ENCODE measurements at regions of chr11 and their contacts with region 1.

Region 1: DNA sequence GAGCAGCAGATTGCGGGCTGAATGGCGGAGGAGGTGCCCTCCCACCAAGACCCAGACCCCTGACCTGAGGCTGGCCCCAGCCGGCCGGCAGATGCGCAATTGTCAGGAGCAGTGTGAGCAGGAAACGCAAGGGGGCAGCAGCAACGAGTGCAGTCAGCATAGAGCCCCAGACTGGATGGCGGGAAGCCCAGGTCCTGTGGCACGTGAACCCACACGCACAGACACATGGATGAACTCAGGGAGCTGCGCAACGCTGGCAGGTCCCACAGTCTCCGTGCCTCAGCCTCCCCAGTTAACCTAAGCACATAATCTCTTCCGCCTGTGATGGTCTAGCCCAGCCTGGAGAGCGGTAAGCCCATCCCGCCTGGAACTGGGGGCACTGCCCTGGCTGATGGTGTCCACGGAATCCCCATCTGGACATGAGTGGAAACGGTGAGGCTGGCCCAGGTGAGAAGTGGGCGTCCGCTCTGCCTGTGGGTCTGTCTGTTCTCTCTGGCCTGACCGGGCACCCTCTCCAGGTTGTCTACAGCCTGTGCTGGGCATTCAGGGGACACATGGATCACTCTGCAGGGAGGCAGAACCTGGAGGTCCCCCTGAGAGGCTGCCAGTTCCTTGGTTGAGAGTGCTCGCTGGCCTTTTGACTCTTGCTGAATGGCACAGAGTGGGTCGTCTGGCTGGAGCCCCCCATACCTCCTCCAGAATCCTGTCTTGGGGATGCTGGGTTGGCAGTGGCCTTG is 626 bp upstream of the TBX10 start:
- H3K4me3 Mint-ChIP-seq: no peak overlapping the region
- H3K27ac Mint-ChIP-seq: no peak overlapping the region
- H3K4me1 Mint-ChIP-seq: peaks cover 14% of the 10 kb centered on the region
- H3K27me3 Mint-ChIP-seq: peaks cover 18% of the 10 kb centered on the region

Region 2: DNA sequence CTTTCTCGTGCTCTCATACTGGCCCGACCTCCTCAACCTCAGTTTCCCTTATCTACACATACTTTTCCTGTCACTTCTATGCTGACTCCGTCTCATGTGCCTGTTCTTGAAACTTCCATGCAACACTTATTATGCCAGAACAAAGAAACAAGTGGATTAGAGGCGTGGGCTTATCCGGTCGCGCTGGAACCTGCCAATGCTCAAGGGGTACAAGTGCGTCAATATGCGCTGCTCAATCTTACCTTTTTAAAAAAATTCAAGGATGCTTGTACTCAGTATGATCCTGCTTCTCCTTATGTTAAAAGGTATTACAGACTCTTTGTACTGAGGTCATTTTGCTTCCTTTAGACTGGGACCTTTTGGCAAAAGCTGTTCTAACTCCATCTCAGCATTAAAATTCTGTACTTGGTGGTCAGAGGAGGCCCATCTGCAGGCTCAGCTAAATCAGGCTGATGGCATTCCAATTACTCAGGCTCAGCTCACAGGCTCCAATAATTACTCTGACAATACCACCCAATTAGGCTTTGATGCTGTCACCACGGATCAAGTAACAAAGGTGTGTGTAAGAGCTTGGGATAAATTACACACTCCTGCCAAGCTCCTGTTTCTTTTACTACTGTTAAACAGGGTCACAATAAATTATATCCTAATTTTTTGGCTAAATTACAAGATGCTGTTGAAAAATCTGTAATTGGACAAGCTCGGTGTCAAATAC is 60.5 kb after region 1 on chr11:
- intact Hi-C with region 1: loop called (anchors 10 kb)
- H3K4me3 Mint-ChIP-seq: no peak overlapping the region
- H3K27ac Mint-ChIP-seq: no peak overlapping the region
- H3K4me1 Mint-ChIP-seq: no peaks in the 10 kb centered on the region
- H3K27me3 Mint-ChIP-seq: peaks cover 6% of the 10 kb centered on the region

Measured in dendritic cell treated with granulocyte-macrophage colony-stimulating factor and Interleukin-4, amounts not matched to agents 40 ng/mL and 50 ng/mL, for 4 days (primary cell).